Lower lobe of right lung (tissue), 2 donors: ENCODE measurements at regions of chr9 and their contacts with region 1.

Region 1: DNA sequence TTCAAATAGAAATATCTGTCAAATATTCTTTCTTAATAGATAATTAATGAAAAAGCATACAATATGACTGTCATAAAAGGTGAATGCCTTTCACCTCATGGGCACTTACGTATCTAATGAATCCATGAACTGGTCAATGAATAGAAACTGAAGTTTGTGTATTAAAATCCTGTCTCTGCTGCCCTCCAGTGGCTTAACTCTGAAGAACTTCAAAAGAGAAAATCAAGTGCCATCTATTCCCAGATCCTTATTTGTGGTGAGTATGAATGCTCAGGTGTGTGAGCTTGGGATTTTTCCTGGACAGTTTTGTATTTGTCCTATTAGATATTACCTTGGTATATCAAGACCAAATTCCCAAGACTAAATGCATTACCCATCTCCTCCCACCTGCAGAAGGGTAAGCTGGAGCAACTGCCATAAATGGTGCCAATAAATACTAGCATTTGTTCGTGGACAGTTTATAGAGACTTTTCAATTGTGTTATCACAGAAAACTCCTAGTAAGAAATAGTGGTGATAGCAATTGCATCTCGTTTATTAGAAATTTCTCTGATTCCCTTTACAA is 44.0 kb upstream of the SVEP1 start:
- DNase-seq: no peak
- ATAC-seq: peak; percentile 59 to 71
- H3K4me3 ChIP-seq: no peak overlapping the region
- H3K27ac ChIP-seq: no peak overlapping the region
- H3K4me1 ChIP-seq: no peaks in the 10 kb centered on the region
- H3K27me3 ChIP-seq: no peaks in the 10 kb centered on the region
- CTCF ChIP-seq: peak; percentile 65

Region 2: DNA sequence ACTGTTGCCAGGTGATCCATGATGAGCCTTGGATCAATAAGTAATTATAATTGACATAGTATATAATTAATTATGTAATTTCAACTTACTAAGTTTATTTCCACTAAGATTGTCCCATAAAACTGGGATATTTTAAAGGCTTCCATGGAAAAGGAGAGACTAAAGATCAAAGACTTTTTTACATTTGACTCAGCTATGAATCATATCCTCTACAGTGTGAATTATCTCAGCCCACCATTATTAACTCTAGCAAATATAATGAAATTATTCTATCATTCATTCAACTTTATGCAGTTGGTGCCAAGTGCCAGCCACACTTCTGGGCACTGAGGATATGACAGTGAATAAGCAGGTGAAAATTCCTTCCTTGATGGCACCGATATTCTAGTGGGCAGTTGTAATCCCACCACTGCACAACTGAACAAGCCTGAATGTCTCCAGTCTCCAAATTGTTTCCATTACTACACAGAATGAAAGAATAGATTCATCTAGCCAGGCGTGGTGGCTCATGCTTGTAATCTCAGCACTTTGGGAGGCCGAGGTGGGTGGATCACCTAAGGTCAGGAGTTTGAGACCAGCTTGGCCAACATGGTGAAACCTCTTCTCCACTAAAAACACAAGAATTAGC is 345.4 kb before region 1 on chr9:
- intact Hi-C with region 1: no loop called
- DNase-seq: no peak
- ATAC-seq: no peak
- H3K4me3 ChIP-seq: no peak overlapping the region
- H3K27ac ChIP-seq: no peak overlapping the region
- H3K4me1 ChIP-seq: no peaks in the 10 kb centered on the region
- H3K27me3 ChIP-seq: no peaks in the 10 kb centered on the region
- CTCF ChIP-seq: no peak

Region 3: GRCh38 chr9:110452227-110452801 is 171.2 kb before region 1 on chr9:
- intact Hi-C with region 1: loop called (anchors 10 kb)
- DNase-seq: no peak
- ATAC-seq: no peak
- H3K4me3 ChIP-seq: no peak overlapping the region
- H3K27ac ChIP-seq: no peak overlapping the region
- H3K4me1 ChIP-seq: no peaks in the 10 kb centered on the region
- H3K27me3 ChIP-seq: no peaks in the 10 kb centered on the region
- CTCF ChIP-seq: peak; percentile 38